ENCODE measurements at regions of chr7 and their contacts with region 1.

Region 1: DNA sequence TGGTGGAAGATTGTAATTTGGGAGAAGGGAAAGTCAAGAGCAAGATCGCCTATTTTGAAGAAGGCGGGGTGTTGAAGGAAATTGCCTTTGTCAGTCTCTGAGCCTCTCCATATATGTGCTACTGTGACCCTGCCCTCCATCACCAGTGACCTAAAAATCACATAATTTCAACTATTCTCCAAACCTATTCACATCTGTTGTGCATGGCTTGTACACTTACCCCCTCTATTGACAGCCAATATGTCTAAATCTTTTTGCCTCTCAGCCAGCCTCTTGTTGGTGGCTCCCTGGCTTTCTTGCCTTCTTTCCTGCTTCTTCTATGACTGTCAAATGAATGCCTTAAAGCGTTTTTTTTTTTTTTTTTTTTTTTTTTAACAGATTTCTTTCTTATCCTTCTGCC is 295.6 kb downstream of the AUTS2 start:
- DNase-seq: no peak
- ATAC-seq: peak; percentile 55 to 68
- H3K4me3 ChIP-seq: no peak overlapping the region
- H3K27ac ChIP-seq: no peak overlapping the region
- H3K4me1 ChIP-seq: no peaks in the 10 kb centered on the region
- H3K27me3 ChIP-seq: no peaks in the 10 kb centered on the region

Region 2: GRCh38 chr7:69412331-69413078 is 481.4 kb before region 1 on chr7:
- intact Hi-C with region 1: loop called in 1 of 4 experiments (anchors 10 kb)
- DNase-seq: peak in 2 of 3 donors; percentile 67 to 78
- ATAC-seq: peak; percentile 93 to 99
- H3K4me3 ChIP-seq: no peak overlapping the region
- H3K27ac ChIP-seq: no peak overlapping the region
- H3K4me1 ChIP-seq: peaks cover 1% of the 10 kb centered on the region
- H3K27me3 ChIP-seq: no peaks in the 10 kb centered on the region

Measured in right cardiac atrium (tissue), 5 donors.